Natural killer cell (primary cell): ENCODE measurements at regions of chr12 and their contacts with region 1.

Region 1: DNA sequence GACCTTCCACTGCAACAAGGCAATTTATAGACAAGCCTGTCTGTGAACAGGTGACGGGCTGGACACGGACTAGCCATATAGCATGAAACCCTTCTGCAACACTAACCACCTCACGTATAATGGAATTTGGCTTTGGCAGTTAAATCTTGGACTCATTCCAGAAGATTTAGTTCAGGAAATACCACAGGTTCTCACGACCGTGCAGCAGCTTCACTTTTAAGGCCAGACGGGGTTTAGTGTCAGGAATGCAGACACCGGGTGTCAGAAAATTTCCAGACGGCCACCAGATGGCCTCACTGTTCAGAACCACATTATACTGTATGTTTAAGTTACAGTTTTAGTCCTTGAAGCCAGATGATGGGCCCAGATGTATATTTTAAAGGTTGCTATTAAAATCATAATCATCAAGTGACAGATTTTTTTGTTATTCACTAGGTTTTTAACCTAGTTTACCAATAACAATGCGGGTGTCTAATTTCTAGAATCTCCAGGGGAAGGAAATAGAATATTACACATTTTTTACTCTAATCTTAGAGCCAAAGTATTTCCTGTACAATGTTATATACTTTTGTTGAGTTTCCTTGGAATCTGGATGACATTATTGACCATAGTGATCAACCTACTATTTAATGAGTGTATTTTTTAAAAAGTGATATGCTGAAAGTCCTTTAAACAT is 90.5 kb upstream of the TMPO start:
- DNase-seq: peak; percentile 25 to 68
- ATAC-seq: peak in 2 of 3 donors; percentile 60 to 72
- H3K4me3 ChIP-seq: no peak overlapping the region
- H3K4me3 Mint-ChIP-seq: no peak overlapping the region
- H3K27ac ChIP-seq: no peak overlapping the region
- H3K27ac Mint-ChIP-seq: no peak overlapping the region
- H3K4me1 ChIP-seq: no peaks in the 10 kb centered on the region
- H3K4me1 Mint-ChIP-seq: peaks cover 0 to 4% of the 10 kb centered on the region in 2 donors
- H3K27me3 ChIP-seq: no peaks in the 10 kb centered on the region
- H3K27me3 Mint-ChIP-seq: no peaks in the 10 kb centered on the region
- CTCF ChIP-seq: peak; percentile 30

Region 2: GRCh38 chr12:98464190-98464589 is 39.3 kb after region 1 on chr12:
- intact Hi-C with region 1: no loop called
- DNase-seq: no peak
- ATAC-seq: peak in 1 of 3 donors; percentile 71
- H3K4me3 ChIP-seq: no peak overlapping the region
- H3K4me3 Mint-ChIP-seq: no peak overlapping the region
- H3K27ac ChIP-seq: no peak overlapping the region
- H3K27ac Mint-ChIP-seq: no peak overlapping the region
- H3K4me1 ChIP-seq: no peaks in the 10 kb centered on the region
- H3K4me1 Mint-ChIP-seq: no peaks in the 10 kb centered on the region
- H3K27me3 ChIP-seq: peaks cover 2% of the 10 kb centered on the region
- H3K27me3 Mint-ChIP-seq: peaks cover 0 to 2% of the 10 kb centered on the region in 2 donors
- CTCF ChIP-seq: no peak

Region 3: GRCh38 chr12:98532681-98533304 is 107.9 kb after region 1 on chr12:
- intact Hi-C with region 1: loop called (anchors 2 kb)
- DNase-seq: peak in 1 of 2 donors; percentile 72
- ATAC-seq: peak in 2 of 3 donors; percentile 50 to 61
- H3K4me3 ChIP-seq: no peak overlapping the region
- H3K4me3 Mint-ChIP-seq: no peak overlapping the region
- H3K27ac ChIP-seq: no peak overlapping the region
- H3K27ac Mint-ChIP-seq: peak overlapping the region in 1 of 2 donors; percentile 40
- H3K4me1 ChIP-seq: no peaks in the 10 kb centered on the region
- H3K4me1 Mint-ChIP-seq: peaks cover 4 to 22% of the 10 kb centered on the region in 2 donors
- H3K27me3 ChIP-seq: no peaks in the 10 kb centered on the region
- H3K27me3 Mint-ChIP-seq: no peaks in the 10 kb centered on the region
- CTCF ChIP-seq: peak; percentile 74

Region 4: GRCh38 chr12:98572010-98572409 is 147.1 kb after region 1 on chr12:
- intact Hi-C with region 1: no loop called
- DNase-seq: no peak
- ATAC-seq: no peak
- H3K4me3 ChIP-seq: no peak overlapping the region
- H3K4me3 Mint-ChIP-seq: no peak overlapping the region
- H3K27ac ChIP-seq: no peak overlapping the region
- H3K27ac Mint-ChIP-seq: no peak overlapping the region
- H3K4me1 ChIP-seq: peaks cover under 1% of the 10 kb centered on the region
- H3K4me1 Mint-ChIP-seq: peaks cover 1% of the 10 kb centered on the region in 2 donors
- H3K27me3 ChIP-seq: no peaks in the 10 kb centered on the region
- H3K27me3 Mint-ChIP-seq: no peaks in the 10 kb centered on the region
- CTCF ChIP-seq: no peak